ENCODE measurements at regions of chr13 and their contacts with region 1.

Region 1: GRCh38 chr13:48580185-48580803 is 47.4 kb upstream of the RCBTB2 start:
- DNase-seq: peak; percentile 52
- ATAC-seq: no peak; the same call in 2 of the 3 replicates
- H3K4me3 ChIP-seq: no peak overlapping the region
- H3K27ac ChIP-seq: no peak overlapping the region
- H3K4me1 ChIP-seq: peaks cover 83% of the 10 kb centered on the region
- H3K27me3 ChIP-seq: no peaks in the 10 kb centered on the region
- CTCF ChIP-seq: peak; percentile 69
- EP300 ChIP-seq: no peak
- POLR2A ChIP-seq: no peak
- RAD21 ChIP-seq: no peak

Region 2: GRCh38 chr13:47917022-47917574 is 663.2 kb before region 1 on chr13:
- CTCF ChIA-PET with region 1: no interaction called
- POLR2A ChIA-PET with region 1: no interaction called
- in situ Hi-C with region 1: no loop called
- intact Hi-C with region 1: no loop called
- DNase-seq: no peak
- ATAC-seq: no peak
- H3K4me3 ChIP-seq: no peak overlapping the region
- H3K27ac ChIP-seq: no peak overlapping the region
- H3K4me1 ChIP-seq: no peaks in the 10 kb centered on the region
- H3K27me3 ChIP-seq: no peaks in the 10 kb centered on the region
- CTCF ChIP-seq: no peak
- EP300 ChIP-seq: no peak
- POLR2A ChIP-seq: no peak
- RAD21 ChIP-seq: no peak

Region 3: DNA sequence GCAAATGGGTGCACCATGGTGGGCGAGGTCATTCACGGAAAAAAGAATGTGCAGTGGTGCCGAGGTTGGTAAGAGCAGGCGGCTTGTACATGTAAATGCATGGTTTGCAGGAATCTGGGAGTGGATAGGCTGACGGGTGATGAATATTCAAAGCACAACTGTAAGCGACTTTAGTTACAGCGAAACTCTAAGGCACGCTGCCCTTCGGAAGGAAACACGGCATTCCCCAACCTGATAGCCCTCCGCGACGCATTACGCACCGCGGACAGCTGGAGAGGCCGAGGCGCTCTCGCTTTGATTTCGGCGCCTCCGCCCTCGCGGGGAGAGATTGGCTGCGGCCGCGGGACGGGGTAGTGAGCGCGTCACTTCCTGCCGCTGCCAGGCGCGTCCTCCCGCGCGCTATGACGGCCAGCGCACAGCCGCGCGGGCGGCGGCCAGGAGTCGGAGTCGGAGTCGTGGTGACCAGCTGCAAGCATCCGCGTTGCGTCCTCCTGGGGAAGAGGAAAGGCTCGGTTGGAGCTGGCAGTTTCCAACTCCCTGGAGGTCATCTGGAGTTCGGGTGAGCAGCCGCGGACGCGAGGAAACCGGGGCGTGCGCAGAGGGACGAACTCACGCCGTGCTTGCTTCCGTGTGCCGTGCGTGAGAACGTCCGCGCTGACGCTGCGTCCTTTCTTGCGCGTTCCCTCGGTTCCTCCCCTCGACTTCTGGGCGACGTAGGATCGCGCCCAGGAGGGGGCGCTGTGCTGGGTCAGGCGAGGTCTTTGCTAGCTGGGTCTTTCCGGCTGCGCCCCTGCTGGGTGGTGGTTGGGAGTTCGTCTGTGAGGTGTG is 542.7 kb before region 1 on chr13 and contains the start of gene NUDT15:
- CTCF ChIA-PET with region 1: no interaction called
- POLR2A ChIA-PET with region 1: no interaction called
- in situ Hi-C with region 1: no loop called
- intact Hi-C with region 1: loop called (anchors 1 kb)
- DNase-seq: peak; percentile 92
- ATAC-seq: peak; percentile 96
- H3K4me3 ChIP-seq: peak within 1 kb of the TSS; percentile 70 to 80 (median 72)
- H3K27ac ChIP-seq: peak within 1 kb of the TSS; percentile 94
- H3K4me1 ChIP-seq: peaks cover 33% of the 10 kb centered on the region
- H3K27me3 ChIP-seq: no peaks in the 10 kb centered on the region; a peak in 1 of 5 replicates
- CTCF ChIP-seq: peak; percentile 100
- EP300 ChIP-seq: peak in 1 of 2 experiments; percentile 3; a peak in 1 of 4 replicates
- POLR2A ChIP-seq: peak; percentile 93 to 99
- RAD21 ChIP-seq: peak; percentile 82
- total RNA-seq, gene NUDT15: 47.3 and 69.9 TPM in 2 replicates

Region 4: DNA sequence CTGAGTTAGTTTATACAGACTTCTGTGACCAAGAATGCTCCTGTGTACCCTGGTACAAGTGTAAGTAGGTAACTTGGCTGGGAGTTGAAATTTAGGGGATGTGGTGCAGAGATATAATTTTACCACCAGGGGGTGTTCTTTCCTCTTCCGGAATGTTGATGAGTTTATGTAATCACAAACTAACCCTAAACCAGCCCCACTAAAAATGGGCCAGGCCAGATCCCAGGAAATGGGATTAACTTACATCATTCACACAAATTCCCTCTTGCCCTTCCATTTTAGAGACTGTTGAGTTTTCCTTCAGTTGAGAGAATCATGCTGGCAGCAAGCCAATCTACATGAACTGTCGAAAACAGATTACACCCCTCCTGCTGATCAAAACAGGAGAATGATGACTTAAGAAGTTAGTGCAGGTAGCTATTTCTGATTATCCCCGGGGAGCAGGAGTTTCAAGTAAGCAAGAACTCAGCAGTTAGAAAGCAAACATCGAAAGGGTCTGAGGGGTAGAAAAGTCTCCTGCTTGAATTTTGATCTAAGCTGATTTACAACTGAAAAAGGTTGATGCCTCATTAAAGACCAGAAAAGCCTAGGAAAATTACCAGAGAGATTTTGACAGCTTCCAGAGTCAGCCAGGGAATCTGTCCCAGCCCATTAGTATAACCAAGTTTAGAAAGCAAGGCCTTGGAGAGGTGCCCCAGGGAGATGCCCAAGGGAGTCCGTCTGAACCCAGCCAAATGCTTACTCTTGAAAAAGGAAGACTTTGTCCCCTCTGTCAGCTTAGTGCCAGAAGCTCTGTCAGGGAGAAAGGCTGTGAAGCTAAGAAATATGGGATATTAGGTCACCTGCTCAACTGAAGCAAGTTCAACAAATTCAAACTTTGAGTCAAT is 453.1 kb before region 1 on chr13:
- CTCF ChIA-PET with region 1: interaction called, 4 read pairs
- POLR2A ChIA-PET with region 1: no interaction called
- in situ Hi-C with region 1: loop called (anchors 25 kb)
- intact Hi-C with region 1: loop called (anchors 2 kb)
- DNase-seq: peak; percentile 63
- ATAC-seq: peak; percentile 73
- H3K4me3 ChIP-seq: peak overlapping the region in 1 of 3 experiments; percentile 27; a peak in 1 of 6 replicates
- H3K27ac ChIP-seq: no peak overlapping the region
- H3K4me1 ChIP-seq: peaks cover 53% of the 10 kb centered on the region
- H3K27me3 ChIP-seq: no peaks in the 10 kb centered on the region
- CTCF ChIP-seq: peak; percentile 74
- EP300 ChIP-seq: no peak
- POLR2A ChIP-seq: no peak
- RAD21 ChIP-seq: no peak

Region 5: GRCh38 chr13:48334534-48335127 is 245.7 kb before region 1 on chr13:
- CTCF ChIA-PET with region 1: interaction called, 18 read pairs
- POLR2A ChIA-PET with region 1: no interaction called
- in situ Hi-C with region 1: loop called (anchors 5 kb)
- intact Hi-C with region 1: loop called (anchors 1 kb)
- DNase-seq: peak; percentile 36
- ATAC-seq: peak; percentile 62
- H3K4me3 ChIP-seq: no peak overlapping the region
- H3K27ac ChIP-seq: no peak overlapping the region
- H3K4me1 ChIP-seq: no peaks in the 10 kb centered on the region
- H3K27me3 ChIP-seq: no peaks in the 10 kb centered on the region
- CTCF ChIP-seq: peak; percentile 65
- EP300 ChIP-seq: no peak
- POLR2A ChIP-seq: no peak
- RAD21 ChIP-seq: peak; percentile 59

Region 6: DNA sequence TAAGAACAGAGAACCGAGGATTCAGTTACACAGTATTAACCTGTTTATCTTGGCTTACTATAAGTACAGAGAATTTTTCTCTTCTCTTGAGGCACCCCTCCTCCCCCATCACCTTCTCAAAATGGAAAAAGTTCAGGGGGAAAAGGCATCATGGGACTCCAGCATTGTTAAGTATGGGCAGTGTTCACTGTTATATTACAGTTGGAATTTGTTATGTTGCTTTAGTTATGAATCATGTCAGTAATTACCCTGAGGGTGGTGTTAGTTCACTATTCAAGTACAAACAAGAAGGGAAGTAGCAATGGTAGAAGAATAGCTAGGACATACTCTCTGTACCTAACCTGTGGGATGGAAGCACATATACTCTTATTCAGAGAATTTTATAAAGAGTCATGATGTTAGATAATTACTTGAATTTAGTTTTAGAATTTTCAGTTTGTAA is 179.4 kb before region 1 on chr13:
- CTCF ChIA-PET with region 1: no interaction called
- POLR2A ChIA-PET with region 1: no interaction called
- in situ Hi-C with region 1: no loop called
- intact Hi-C with region 1: loop called (anchors 10 kb)
- DNase-seq: no peak
- ATAC-seq: peak; percentile 50; the same call in 2 of the 3 replicates
- H3K4me3 ChIP-seq: no peak overlapping the region
- H3K27ac ChIP-seq: peak overlapping the region; percentile 22
- H3K4me1 ChIP-seq: peaks cover 58% of the 10 kb centered on the region
- H3K27me3 ChIP-seq: no peaks in the 10 kb centered on the region
- CTCF ChIP-seq: no peak
- EP300 ChIP-seq: no peak
- POLR2A ChIP-seq: no peak
- RAD21 ChIP-seq: no peak

Measured in HepG2 (cell line).